PC-3 (cell line): ENCODE measurements at regions of chr20 and their contacts with region 1.

Region 1: DNA sequence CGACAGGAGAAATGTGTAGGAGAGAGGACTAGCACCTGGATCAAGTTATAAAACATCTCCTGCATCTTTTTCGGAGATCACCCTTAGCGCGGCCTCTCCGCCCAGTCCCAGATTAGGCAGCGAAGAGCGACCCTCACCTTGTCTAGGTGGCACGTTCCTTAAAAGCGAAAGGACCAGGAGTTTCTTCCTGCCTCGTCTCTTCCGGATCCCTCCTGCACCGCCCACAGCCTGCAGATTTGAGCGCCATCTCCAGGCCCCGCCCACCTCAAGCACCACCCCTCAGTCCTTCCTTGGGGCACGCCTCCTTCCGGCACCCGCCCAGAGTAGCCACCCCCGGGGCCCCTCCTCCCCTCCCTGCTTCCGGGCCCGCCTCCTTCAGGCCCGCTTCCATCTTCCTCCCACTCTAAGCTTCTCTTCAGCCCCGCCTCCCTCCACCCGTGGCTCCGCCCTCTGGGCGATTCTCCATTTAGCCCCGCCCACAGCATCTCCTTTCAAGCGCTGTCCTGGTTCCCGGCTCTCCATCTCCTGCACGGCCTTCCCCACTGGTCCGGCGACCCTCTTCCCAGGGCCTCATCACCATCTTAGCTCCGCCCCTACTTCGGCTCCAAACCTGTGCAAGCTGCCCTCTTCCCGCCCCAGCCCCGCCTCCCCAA is 662 bp upstream of the RALY start:
- DNase-seq: peak; percentile 97
- ATAC-seq: peak; percentile 76
- H3K4me3 ChIP-seq: peak overlapping the region; percentile 95
- H3K27ac ChIP-seq: peak overlapping the region; percentile 84
- H3K4me1 ChIP-seq: peaks cover 20% of the 10 kb centered on the region
- H3K27me3 ChIP-seq: no peaks in the 10 kb centered on the region
- CTCF ChIP-seq: no peak

Region 2: DNA sequence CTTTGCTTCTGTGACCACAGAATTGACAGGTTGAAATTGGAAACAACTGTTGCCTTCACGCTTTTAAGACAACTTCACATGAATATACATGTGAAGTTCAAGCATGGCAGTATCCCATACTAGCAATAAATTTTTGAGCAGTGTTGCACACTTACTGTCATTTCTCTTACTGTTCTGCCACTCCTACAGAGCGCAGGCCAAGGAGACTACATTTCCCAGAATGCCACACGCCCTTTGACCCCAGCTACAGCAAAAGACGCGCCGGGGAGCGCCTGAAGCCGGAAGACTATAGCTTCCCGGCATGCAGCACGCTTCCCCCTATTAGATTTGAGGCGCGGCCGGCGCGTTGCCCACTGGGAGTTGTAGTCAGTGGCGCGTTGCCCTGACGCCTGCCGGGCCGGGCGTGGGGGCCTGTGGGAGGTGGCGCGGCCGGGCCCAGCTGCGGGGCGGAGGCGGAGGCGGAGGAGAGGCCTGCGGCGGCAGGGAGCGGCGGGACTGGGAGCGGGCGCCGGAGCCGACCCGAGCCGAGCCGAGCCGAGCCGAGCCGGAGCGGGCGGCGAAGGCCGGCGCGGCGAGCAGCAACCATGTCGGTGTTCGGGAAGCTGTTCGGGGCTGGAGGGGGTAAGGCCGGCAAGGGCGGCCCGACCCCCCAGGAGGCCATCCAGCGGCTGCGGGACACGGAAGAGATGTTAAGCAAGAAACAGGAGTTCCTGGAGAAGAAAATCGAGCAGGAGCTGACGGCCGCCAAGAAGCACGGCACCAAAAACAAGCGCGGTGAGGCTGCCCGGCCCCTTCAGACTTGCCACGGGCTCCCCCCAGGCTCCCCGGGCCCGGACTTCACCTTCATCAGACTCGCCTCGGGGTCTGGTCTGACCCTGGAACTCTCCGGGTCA is 181.9 kb before region 1 on chr20 and contains the start of gene CHMP4B:
- CTCF ChIA-PET with region 1: interaction called, 7 read pairs
- POLR2A ChIA-PET with region 1: no interaction called
- intact Hi-C with region 1: loop called (anchors 10 kb)
- DNase-seq: peak; percentile 99
- ATAC-seq: peak; percentile 88
- H3K4me3 ChIP-seq: peak within 1 kb of the TSS; percentile 89
- H3K27ac ChIP-seq: peak within 1 kb of the TSS; percentile 87
- H3K4me1 ChIP-seq: peaks cover 30% of the 10 kb centered on the region
- H3K27me3 ChIP-seq: no peaks in the 10 kb centered on the region
- CTCF ChIP-seq: no peak
- total RNA-seq, gene CHMP4B: 68.8 and 91.1 TPM in 2 replicates

Region 3: GRCh38 chr20:33933469-33933909 is 59.6 kb before region 1 on chr20:
- CTCF ChIA-PET with region 1: no interaction called
- POLR2A ChIA-PET with region 1: no interaction called
- intact Hi-C with region 1: no loop called
- DNase-seq: peak; percentile 56
- ATAC-seq: peak; percentile 56
- H3K4me3 ChIP-seq: no peak overlapping the region
- H3K27ac ChIP-seq: no peak overlapping the region
- H3K4me1 ChIP-seq: no peaks in the 10 kb centered on the region
- H3K27me3 ChIP-seq: no peaks in the 10 kb centered on the region
- CTCF ChIP-seq: peak; percentile 62

Region 4: GRCh38 chr20:33954504-33954903 is 38.5 kb before region 1 on chr20:
- CTCF ChIA-PET with region 1: no interaction called
- POLR2A ChIA-PET with region 1: no interaction called
- intact Hi-C with region 1: no loop called
- DNase-seq: no peak
- ATAC-seq: no peak
- H3K4me3 ChIP-seq: no peak overlapping the region
- H3K27ac ChIP-seq: no peak overlapping the region
- H3K4me1 ChIP-seq: no peaks in the 10 kb centered on the region
- H3K27me3 ChIP-seq: peaks cover 10% of the 10 kb centered on the region; the same call in 1 of the 2 replicates
- CTCF ChIP-seq: no peak

Region 5: GRCh38 chr20:33971147-33971975 is 21.7 kb before region 1 on chr20:
- CTCF ChIA-PET with region 1: no interaction called
- POLR2A ChIA-PET with region 1: interaction called, 14 read pairs
- intact Hi-C with region 1: no loop called
- DNase-seq: no peak
- ATAC-seq: no peak
- H3K4me3 ChIP-seq: no peak overlapping the region
- H3K27ac ChIP-seq: no peak overlapping the region
- H3K4me1 ChIP-seq: no peaks in the 10 kb centered on the region
- H3K27me3 ChIP-seq: no peaks in the 10 kb centered on the region
- CTCF ChIP-seq: no peak

Region 6: DNA sequence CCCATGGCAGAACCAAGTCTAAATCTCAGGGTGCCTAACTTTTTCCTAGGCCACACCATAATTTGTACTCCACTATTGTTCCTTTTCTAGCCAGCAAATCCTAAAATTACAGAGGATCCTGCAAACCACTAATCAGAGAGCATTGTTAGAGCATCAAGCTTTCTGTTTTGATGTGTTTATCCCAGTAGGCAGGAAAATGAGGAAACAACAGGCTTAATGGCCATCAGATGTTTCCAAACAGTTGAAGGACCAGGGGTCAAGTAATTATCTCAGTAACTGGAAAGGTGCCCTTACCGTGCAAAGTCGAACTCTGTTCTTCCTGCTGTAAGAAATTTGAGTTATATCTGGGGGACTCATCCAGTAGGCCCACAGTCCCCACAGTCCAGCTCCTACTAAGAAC is 59.4 kb after region 1 on chr20:
- CTCF ChIA-PET with region 1: no interaction called
- POLR2A ChIA-PET with region 1: interaction called, 11 read pairs
- intact Hi-C with region 1: no loop called
- DNase-seq: no peak
- ATAC-seq: no peak
- H3K4me3 ChIP-seq: no peak overlapping the region
- H3K27ac ChIP-seq: no peak overlapping the region
- H3K4me1 ChIP-seq: no peaks in the 10 kb centered on the region
- H3K27me3 ChIP-seq: no peaks in the 10 kb centered on the region
- CTCF ChIP-seq: no peak